Heart left ventricle (tissue), 16 donors: ENCODE measurements at regions of chr1 and their contacts with region 1.

Region 1: GRCh38 chr1:20493839-20494608 is 8.0 kb upstream of the CAMK2N1 start:
- DNase-seq: peak; percentile 80 to 89 (median 84)
- ATAC-seq: peak; percentile 77 to 90 (median 83)
- H3K4me3 ChIP-seq: no peak overlapping the region
- H3K27ac ChIP-seq: peak overlapping the region in 7 of 12 donors; percentile 13 to 71 (median 47)
- H3K4me1 ChIP-seq: peaks cover 0 to 24% (median 14%) of the 10 kb centered on the region in 12 donors
- H3K27me3 ChIP-seq: peaks cover 0 to 6% (median 0%) of the 10 kb centered on the region in 9 donors
- CTCF ChIP-seq: peak; percentile 94 to 98 (median 95)
- POLR2A ChIP-seq: no peak

Region 2: DNA sequence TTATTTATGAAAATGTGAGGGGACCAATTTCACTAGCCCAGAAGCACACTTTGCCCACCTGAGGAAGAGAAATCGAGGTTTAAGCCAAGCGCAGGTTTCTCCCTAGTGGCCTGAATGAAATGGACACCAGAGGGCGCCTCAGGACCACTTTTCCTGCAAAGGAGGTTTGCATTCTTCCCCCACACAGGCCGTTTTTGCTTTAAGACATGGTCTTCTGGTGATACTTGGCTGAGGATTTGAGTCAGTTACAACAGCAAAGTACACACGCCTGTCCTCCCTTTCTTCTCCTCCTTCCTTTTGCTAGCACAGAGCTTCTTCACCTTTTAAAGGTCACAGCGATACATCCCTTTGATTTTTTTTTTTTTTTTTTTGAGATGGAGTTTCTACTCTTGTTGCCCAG is 576.0 kb before region 1 on chr1:
- intact Hi-C with region 1: loop called (anchors 2 to 10 kb)
- DNase-seq: peak; percentile 74 to 86 (median 79)
- ATAC-seq: peak; percentile 69 to 84 (median 71)
- H3K4me3 ChIP-seq: no peak overlapping the region
- H3K27ac ChIP-seq: no peak overlapping the region
- H3K4me1 ChIP-seq: peaks cover 0 to 11% (median 0%) of the 10 kb centered on the region in 12 donors
- H3K27me3 ChIP-seq: peaks cover 0 to 5% (median 0%) of the 10 kb centered on the region in 9 donors
- CTCF ChIP-seq: peak; percentile 83 to 94 (median 89)
- POLR2A ChIP-seq: no peak

Region 3: GRCh38 chr1:20100632-20101355 is 393.2 kb before region 1 on chr1:
- intact Hi-C with region 1: loop called in 5 of 10 experiments (anchors 5 to 10 kb)
- DNase-seq: peak in 4 of 5 donors; percentile 30 to 43 (median 38)
- ATAC-seq: peak in 3 of 4 donors; percentile 82 to 87 (median 83)
- H3K4me3 ChIP-seq: no peak overlapping the region
- H3K27ac ChIP-seq: no peak overlapping the region
- H3K4me1 ChIP-seq: peaks cover 0 to 10% (median 0%) of the 10 kb centered on the region in 12 donors
- H3K27me3 ChIP-seq: peaks cover 0 to 5% (median 0%) of the 10 kb centered on the region in 9 donors
- CTCF ChIP-seq: peak; percentile 59 to 77 (median 70)
- POLR2A ChIP-seq: no peak

Region 4: DNA sequence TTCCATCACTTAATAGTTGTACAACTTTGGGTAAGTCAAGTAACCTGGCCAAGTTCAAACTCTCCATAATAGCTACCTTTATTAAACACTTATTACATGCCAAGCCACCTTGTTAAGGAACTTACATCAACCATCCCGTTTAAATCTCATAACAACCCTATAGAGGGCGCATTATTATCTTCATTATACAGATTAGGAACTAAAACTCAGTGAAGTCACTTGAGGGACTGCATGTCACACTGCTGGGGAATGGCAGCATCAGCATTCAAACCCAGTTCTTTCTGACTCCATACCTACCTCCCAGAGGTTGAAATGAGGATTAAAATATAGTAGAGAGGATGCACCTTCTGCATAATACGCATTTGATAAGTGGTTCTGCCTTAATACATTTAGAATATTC is 260.6 kb before region 1 on chr1:
- intact Hi-C with region 1: loop called in 1 of 10 experiments (anchors 5 kb)
- DNase-seq: no peak
- ATAC-seq: peak in 1 of 4 donors; percentile 62
- H3K4me3 ChIP-seq: no peak overlapping the region
- H3K27ac ChIP-seq: no peak overlapping the region
- H3K4me1 ChIP-seq: peaks cover 0 to 6% (median 0%) of the 10 kb centered on the region in 12 donors
- H3K27me3 ChIP-seq: peaks cover 0 to 43% (median 12%) of the 10 kb centered on the region in 9 donors
- CTCF ChIP-seq: peak in 9 of 12 donors; percentile 14 to 42 (median 32)
- POLR2A ChIP-seq: no peak

Region 5: DNA sequence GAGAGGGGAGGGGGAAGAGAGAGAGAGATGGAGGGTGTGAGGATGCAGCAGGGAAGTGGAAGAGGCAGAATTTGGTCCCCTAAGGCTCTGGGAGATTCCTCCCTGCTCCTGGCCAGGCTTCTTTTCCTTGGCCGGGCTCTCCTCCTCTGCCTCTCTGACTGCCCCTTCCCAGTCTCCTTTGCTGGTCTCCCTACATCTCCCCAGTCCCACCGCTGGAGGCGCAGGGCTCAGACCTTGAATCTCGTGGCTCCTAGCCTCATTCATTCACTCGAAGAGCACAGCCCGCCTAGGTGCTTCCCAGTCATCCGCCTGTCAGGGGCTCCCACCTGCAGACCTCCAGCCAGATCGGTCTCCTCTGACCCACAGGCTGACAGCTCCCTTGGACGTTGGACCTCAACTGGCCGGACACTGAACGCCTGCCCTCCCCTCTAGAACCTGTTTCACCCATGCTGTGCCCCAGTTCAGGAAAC is 126.9 kb before region 1 on chr1:
- intact Hi-C with region 1: loop called in 8 of 10 experiments (anchors 5 kb)
- DNase-seq: peak in 4 of 5 donors; percentile 32 to 65 (median 49)
- ATAC-seq: peak; percentile 32 to 88 (median 76)
- H3K4me3 ChIP-seq: peak overlapping the region; percentile 11 to 51 (median 42)
- H3K27ac ChIP-seq: peak overlapping the region in 1 of 12 donors; percentile 48
- H3K4me1 ChIP-seq: peaks cover 0 to 18% (median 5%) of the 10 kb centered on the region in 12 donors
- H3K27me3 ChIP-seq: peaks cover 6 to 79% (median 32%) of the 10 kb centered on the region in 9 donors
- CTCF ChIP-seq: peak in 11 of 12 donors; percentile 21 to 58 (median 47)
- POLR2A ChIP-seq: no peak